Left cardiac atrium (tissue), 4 donors: ENCODE measurements at regions of chr1 and their contacts with region 1.

Region 1: DNA sequence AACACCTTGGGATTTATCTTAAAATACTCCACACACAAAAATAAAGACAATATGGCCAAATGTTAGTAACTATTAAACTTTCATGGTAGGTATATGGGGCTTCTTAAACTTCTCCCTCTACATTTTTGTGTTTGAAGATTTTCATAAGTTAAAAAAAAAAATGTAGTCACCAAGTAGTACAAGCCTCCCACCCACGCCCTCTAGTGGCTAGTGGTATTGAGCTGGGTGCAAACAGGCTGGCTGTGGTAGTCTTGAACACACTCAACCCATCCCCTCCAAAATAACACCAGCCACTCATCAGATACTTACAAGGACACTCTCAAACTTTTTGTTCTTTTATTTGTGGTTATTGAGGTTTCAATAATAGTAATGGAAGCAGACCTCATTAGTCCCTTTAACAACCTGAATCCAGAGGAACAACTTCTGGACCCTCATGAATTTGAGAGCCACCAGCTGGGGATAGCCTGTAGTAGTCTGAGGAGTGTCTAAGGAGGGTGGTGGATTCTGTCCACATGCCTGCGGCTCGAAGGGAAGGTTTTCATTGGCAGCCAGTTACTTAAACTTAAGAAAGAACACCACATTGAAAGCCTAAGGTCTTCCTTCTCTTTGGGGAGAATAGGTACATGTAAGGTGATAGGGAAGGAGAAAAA is 15.6 kb downstream of the RD3 start:
- DNase-seq: peak; percentile 76
- ATAC-seq: peak in 1 of 2 donors; percentile 63

Region 2: GRCh38 chr1:211323156-211324063 is 152.9 kb before region 1 on chr1:
- intact Hi-C with region 1: loop called in 1 of 2 experiments (anchors 10 kb)
- DNase-seq: peak; percentile 35
- ATAC-seq: peak in 1 of 2 donors; percentile 45

Region 3: DNA sequence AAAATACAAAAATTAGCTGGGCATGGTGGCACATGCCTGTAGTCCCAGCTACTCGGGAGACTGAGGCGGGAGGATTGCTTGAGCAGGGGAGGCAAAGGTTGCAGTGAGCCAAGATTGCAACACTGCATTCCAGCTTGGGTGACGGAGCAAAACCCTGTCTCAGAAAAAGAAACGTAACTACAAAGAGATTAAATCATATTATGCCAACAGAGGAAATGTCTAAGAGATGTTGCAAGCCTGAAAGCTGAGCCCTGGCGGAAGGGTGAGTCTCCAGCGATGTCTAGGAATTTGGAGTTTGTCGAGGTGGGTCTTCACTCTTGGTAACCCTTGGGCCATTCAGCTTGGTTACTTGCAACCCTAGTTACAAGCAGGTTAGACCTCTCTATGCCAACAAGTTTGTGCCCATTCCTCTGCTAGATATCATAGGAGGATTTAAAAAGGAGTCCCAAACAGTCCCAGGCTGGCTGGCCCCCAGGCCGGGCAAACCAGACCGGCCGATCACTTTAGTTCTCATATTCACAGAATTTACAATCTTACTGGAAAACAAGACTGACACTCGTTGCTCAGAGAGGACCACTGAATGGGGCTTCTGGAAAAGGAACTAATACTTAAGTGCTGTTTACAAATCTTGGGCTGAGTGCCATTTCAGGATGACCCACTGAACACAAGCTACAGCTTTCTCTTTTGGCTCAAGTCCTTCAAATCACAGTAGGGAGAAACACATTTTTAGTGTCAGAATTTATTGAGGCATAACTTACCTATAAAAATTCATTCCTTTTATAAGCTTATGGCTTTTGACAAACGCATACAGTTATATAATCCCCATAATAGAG is 75.5 kb after region 1 on chr1:
- intact Hi-C with region 1: no loop called
- DNase-seq: no peak
- ATAC-seq: peak in 1 of 2 donors; percentile 29